ENCODE measurements at regions of chr3 and their contacts with region 1.

Region 1: GRCh38 chr3:160449636-160450598 is at the start of gene TRIM59:
- DNase-seq: peak; percentile 96
- ATAC-seq: peak; percentile 90
- H3K4me3 ChIP-seq: peak within 1 kb of the TSS; percentile 89
- H3K27ac ChIP-seq: peak within 1 kb of the TSS; percentile 94
- H3K4me1 ChIP-seq: peaks cover 6% of the 10 kb centered on the region
- H3K27me3 ChIP-seq: no peaks in the 10 kb centered on the region
- CTCF ChIP-seq: 0 out of 6 replicates have a peak, but pooled peaks of 2 of the 3 experiments have one; percentile 5 to 10
- EP300 ChIP-seq: no peak
- POLR2A ChIP-seq: peak; percentile 99
- RAD21 ChIP-seq: no peak
- polyA plus RNA-seq, gene TRIM59: 28.9 to 105 TPM

Region 2: GRCh38 chr3:160413613-160414248 is 36.2 kb before region 1 on chr3:
- CTCF ChIA-PET with region 1: interaction called, 17 read pairs
- POLR2A ChIA-PET with region 1: interaction called, 5 read pairs
- RAD21 ChIA-PET with region 1: interaction called, 5 read pairs
- SMC1A ChIA-PET with region 1: interaction called, 73 read pairs
- in situ Hi-C with region 1: no loop called
- intact Hi-C with region 1: no loop called
- DNase-seq: peak; percentile 19
- ATAC-seq: peak; percentile 72
- H3K4me3 ChIP-seq: no peak overlapping the region
- H3K27ac ChIP-seq: no peak overlapping the region
- H3K4me1 ChIP-seq: no peaks in the 10 kb centered on the region
- H3K27me3 ChIP-seq: no peaks in the 10 kb centered on the region
- CTCF ChIP-seq: peak; percentile 77 to 83 (median 82)
- EP300 ChIP-seq: no peak
- POLR2A ChIP-seq: no peak
- RAD21 ChIP-seq: peak; percentile 93

Region 3: DNA sequence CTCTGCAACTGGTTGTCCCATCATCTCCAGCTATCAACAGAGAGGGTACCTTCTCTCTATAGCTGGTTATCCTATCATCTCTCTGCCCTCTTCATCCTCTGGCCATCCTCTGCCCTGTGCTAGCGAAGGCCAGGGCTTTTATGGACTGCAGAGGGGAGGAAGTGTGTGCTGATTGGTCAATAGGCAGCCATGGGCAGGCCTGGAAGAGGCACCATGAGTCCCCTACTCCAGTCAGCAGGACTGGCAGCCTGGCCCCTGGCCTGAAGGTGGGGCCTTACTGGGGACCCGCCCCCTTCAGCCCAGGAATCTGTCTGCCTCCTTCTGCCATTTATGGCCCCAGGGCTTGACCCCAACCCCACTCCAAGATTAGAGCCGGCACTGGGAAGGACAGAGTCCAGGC is 10.1 kb after region 1 on chr3:
- CTCF ChIA-PET with region 1: interaction called, 4 read pairs
- POLR2A ChIA-PET with region 1: interaction called, 10 read pairs
- RAD21 ChIA-PET with region 1: interaction called, 5 read pairs
- SMC1A ChIA-PET with region 1: interaction called, 5 read pairs
- in situ Hi-C with region 1: no loop called
- intact Hi-C with region 1: no loop called
- DNase-seq: no peak
- ATAC-seq: no peak
- H3K4me3 ChIP-seq: no peak overlapping the region
- H3K27ac ChIP-seq: no peak overlapping the region
- H3K4me1 ChIP-seq: no peaks in the 10 kb centered on the region
- H3K27me3 ChIP-seq: no peaks in the 10 kb centered on the region; a peak in 1 of 4 replicates
- CTCF ChIP-seq: no peak
- EP300 ChIP-seq: no peak
- POLR2A ChIP-seq: no peak
- RAD21 ChIP-seq: no peak

Region 4: DNA sequence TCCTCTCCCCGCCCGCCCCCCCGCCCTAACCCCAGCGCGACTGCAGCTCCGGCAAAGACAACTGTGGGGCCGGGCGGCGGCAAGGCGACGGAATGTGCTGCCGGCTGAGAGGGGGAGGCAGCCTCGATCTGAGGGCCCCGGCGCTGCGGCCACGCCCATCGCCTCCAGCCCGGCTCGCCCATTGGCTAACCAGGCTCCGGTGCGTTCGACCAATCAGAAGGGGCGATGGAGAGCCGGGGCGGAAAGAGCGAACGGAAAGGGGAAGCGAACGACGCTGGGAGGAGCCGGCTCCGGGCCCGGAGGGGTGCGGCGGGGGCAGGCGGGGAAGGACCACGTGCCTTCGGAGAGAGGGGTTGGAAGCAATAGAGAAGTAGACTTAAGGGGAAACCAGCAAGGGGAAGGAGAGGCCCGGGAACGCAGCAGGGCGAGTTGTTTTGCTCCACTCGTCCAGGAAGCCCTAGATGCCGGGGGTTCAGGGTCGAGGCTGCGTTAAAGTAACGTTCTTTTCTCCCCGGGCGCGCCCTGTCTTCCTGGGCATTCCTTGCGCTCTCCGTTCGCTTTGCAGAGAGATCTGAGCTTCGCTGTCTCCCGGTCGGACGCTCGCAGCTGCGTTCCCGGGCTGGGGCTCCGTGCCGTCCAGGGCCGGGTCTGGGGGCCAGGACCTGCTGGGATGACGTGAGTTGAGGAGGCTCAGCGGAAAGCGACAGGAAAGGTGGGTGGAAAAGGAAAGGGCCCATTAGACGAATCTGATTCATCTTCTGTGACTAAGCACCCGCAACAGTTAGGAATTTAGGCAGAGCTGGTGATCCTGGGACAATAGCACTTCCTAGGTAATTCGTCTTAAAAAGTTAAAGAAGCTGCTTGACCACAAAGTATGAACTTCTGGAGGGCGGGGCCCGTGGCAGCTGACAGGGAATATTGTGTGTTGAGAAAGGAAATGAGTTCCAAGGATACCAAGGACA is 115.8 kb after region 1 on chr3 and contains the start of gene KPNA4:
- CTCF ChIA-PET with region 1: interaction called, 4 read pairs
- POLR2A ChIA-PET with region 1: interaction called, 13 read pairs
- RAD21 ChIA-PET with region 1: interaction called, 4 read pairs
- SMC1A ChIA-PET with region 1: interaction called, 6 read pairs
- in situ Hi-C with region 1: no loop called
- intact Hi-C with region 1: no loop called
- DNase-seq: peak; percentile 88
- ATAC-seq: peak; percentile 92
- H3K4me3 ChIP-seq: peak within 1 kb of the TSS; percentile 99
- H3K27ac ChIP-seq: peak within 1 kb of the TSS; percentile 83
- H3K4me1 ChIP-seq: peaks cover 7% of the 10 kb centered on the region; the same call in 1 of the 2 replicates
- H3K27me3 ChIP-seq: no peaks in the 10 kb centered on the region
- CTCF ChIP-seq: no peak
- EP300 ChIP-seq: no peak
- POLR2A ChIP-seq: peak; percentile 96
- RAD21 ChIP-seq: no peak
- polyA plus RNA-seq, gene KPNA4: 9.9 to 15.8 TPM

Region 5: DNA sequence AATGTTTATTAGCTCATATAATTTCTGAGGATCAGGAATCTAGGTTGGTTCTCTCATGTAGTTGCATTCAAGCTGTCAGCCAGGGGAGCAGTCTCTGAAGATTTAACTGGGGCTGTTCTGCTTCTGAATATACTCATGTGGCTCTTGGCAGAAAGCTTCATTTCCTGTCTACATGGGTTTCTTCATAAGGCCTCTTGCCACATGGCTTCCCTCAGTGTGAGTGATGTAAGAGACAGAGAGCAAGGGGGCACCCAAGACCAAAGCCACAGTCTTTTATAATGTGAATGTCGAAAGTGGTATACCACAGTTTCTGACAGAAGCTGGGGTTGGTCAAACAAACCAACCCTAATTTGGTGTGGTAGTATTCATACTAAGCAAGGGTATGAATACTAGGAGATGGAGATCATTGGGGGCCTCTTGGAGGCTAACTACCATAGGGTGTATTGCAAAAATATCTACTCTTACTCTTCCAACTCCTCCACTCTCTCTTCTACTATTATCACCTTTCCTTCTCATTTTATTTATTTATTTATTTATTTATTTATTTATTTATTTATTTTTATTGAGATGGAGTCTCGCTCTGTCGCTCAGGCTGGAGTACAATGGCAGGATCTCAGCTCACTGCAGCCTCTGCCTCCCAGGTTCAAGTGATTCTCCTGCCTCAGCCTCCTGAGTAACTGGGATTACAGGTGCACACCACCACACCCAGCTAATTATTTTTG is 531.5 kb after region 1 on chr3:
- CTCF ChIA-PET with region 1: no interaction called
- POLR2A ChIA-PET with region 1: no interaction called
- RAD21 ChIA-PET with region 1: no interaction called
- SMC1A ChIA-PET with region 1: no interaction called
- in situ Hi-C with region 1: no loop called
- intact Hi-C with region 1: no loop called
- DNase-seq: peak; percentile 31
- ATAC-seq: peak; percentile 96
- H3K4me3 ChIP-seq: no peak overlapping the region
- H3K27ac ChIP-seq: no peak overlapping the region
- H3K4me1 ChIP-seq: no peaks in the 10 kb centered on the region
- H3K27me3 ChIP-seq: no peaks in the 10 kb centered on the region
- CTCF ChIP-seq: no peak
- EP300 ChIP-seq: no peak
- POLR2A ChIP-seq: no peak
- RAD21 ChIP-seq: no peak